ENCODE measurements at regions of chr16 and their contacts with region 1.

Region 1: DNA sequence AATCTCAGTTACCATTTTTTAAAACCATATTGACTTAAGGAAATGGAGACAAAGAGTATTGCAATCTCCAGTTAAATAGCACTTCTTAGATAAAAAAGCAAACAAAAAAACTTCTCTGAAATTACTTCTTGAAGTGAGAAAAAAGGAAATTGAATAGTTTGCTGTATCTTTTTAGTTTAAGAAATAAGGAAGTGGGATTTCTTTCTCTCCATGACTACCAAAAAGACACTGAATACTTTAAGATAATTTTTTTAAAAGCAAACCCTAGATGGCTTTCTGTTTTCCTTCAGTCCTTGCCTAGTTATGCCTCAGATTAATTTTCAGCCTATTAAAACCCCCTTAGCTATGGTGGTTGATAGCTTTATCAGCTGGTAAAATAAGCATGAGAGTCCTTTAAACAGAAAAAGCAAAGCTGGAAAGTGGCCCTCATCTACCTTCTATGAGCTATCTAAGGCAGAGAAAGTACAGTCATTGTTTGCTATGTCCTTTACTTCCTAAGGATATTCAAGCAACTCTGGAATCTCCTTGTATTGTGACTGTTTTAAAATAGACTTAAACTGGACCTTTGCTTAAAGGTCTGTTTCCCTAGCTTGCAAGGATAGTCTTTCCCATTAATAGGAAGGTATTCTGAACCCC is 28.6 kb downstream of the TPPP3 start:
- DNase-seq: no peak
- H3K4me3 ChIP-seq: no peak overlapping the region
- H3K27ac ChIP-seq: no peak overlapping the region
- H3K4me1 ChIP-seq: no peaks in the 10 kb centered on the region
- H3K27me3 ChIP-seq: peaks cover 50% of the 10 kb centered on the region
- CTCF ChIP-seq: no peak

Region 2: GRCh38 chr16:67339453-67339852 is 25.3 kb before region 1 on chr16:
- CTCF ChIA-PET with region 1: no interaction called
- POLR2A ChIA-PET with region 1: interaction called, 12 read pairs
- intact Hi-C with region 1: no loop called
- DNase-seq: no peak
- H3K4me3 ChIP-seq: no peak overlapping the region
- H3K27ac ChIP-seq: no peak overlapping the region
- H3K4me1 ChIP-seq: no peaks in the 10 kb centered on the region
- H3K27me3 ChIP-seq: no peaks in the 10 kb centered on the region
- CTCF ChIP-seq: peak; percentile 26; the same call in 1 of the 2 replicates

Region 3: DNA sequence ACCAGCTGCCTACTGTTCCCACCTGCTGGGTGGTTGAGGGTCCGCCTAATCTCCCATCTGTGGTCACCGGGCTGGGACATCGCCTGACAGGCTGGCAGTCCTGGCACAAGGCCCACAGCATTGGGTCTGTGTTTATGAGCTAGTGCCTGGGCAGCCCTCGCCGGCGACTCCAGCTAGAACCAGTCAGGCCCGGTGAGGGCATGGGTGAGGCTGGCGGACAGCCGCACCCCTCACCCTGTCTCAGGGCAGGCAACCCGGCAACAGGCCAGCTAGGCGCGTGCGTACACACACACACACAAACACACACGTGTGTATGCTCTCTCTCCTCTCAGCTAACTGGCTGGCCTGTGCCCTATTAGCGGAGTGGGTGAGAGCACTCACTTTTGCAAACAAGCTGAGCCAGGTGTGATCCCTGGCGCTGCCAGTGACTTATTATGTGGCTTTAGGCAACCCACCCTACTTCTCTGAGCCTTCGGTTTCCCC is 76.6 kb after region 1 on chr16:
- CTCF ChIA-PET with region 1: no interaction called
- POLR2A ChIA-PET with region 1: no interaction called
- intact Hi-C with region 1: no loop called
- DNase-seq: no peak
- H3K4me3 ChIP-seq: no peak overlapping the region
- H3K27ac ChIP-seq: no peak overlapping the region
- H3K4me1 ChIP-seq: no peaks in the 10 kb centered on the region
- H3K27me3 ChIP-seq: no peaks in the 10 kb centered on the region
- CTCF ChIP-seq: no peak

Region 4: DNA sequence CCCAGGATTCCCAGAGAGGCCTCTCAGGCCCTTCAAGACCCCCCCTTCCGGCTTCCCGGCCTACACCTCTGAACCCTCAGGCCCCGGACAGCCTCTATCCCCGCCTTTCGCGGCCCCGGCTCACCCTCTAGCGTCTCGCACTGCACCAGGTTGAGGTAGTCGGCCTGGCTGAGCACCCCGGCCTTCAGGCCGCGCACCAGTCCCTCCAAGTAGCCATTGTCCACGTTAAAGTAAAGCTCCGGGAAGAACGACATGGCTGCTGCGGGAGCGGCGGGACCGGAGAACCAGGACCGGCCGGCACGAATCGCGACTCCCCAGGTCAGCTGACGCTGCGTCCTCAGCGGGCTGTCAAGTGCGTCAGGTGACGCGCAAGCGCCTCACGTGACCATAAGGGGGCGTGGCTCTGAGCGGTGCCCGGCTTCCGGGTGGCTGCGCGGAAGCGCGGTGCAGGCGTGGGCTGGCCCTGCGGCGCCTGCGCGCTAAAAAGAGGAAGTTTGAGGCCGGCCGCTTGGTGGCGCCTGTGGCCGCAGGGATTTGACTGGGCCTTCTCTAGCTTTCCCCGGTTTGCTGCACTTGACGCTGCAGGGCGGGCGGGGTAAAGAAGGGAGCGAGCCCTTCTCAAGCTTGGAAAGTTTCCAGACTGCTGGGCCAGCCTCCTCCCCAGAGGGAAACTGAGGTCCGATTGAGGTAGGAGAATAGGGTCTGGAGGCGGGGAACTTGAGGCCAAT is 116.3 kb after region 1 on chr16 and contains the start of gene ATP6V0D1:
- CTCF ChIA-PET with region 1: no interaction called
- POLR2A ChIA-PET with region 1: interaction called, 13 read pairs
- intact Hi-C with region 1: no loop called
- DNase-seq: peak; percentile 98
- H3K4me3 ChIP-seq: peak within 1 kb of the TSS; percentile 95
- H3K27ac ChIP-seq: peak within 1 kb of the TSS; percentile 83
- H3K4me1 ChIP-seq: no peaks in the 10 kb centered on the region
- H3K27me3 ChIP-seq: no peaks in the 10 kb centered on the region
- CTCF ChIP-seq: peak; percentile 96
- total RNA-seq, gene ATP6V0D1: 56.5 and 63.9 TPM in 2 replicates